ENCODE measurements at regions of chr19 and their contacts with region 1.

Region 1: GRCh38 chr19:33778089-33778791 is 18.4 kb upstream of the KCTD15 start:
- DNase-seq: peak; percentile 69
- H3K4me3 ChIP-seq: no peak overlapping the region
- H3K27ac ChIP-seq: no peak overlapping the region
- H3K4me1 ChIP-seq: peaks cover 6% of the 10 kb centered on the region
- H3K27me3 ChIP-seq: peaks cover 0 to 4% of the 10 kb centered on the region in 2 experiments
- CTCF ChIP-seq: peak; percentile 100
- POLR2A ChIP-seq: no peak

Region 2: GRCh38 chr19:33795370-33796163 is 17.3 kb after region 1 on chr19:
- CTCF ChIA-PET with region 1: interaction called, 36 read pairs
- POLR2A ChIA-PET with region 1: no interaction called
- dilution Hi-C with region 1: no loop called
- intact Hi-C with region 1: loop called (anchors 1 kb)
- DNase-seq: peak; percentile 88
- H3K4me3 ChIP-seq: peak overlapping the region; percentile 64 to 86 (median 71)
- H3K27ac ChIP-seq: peak overlapping the region; percentile 83
- H3K4me1 ChIP-seq: peaks cover 17% of the 10 kb centered on the region
- H3K27me3 ChIP-seq: no peaks in the 10 kb centered on the region
- CTCF ChIP-seq: peak; percentile 74 to 85
- POLR2A ChIP-seq: peak; percentile 81

Region 3: DNA sequence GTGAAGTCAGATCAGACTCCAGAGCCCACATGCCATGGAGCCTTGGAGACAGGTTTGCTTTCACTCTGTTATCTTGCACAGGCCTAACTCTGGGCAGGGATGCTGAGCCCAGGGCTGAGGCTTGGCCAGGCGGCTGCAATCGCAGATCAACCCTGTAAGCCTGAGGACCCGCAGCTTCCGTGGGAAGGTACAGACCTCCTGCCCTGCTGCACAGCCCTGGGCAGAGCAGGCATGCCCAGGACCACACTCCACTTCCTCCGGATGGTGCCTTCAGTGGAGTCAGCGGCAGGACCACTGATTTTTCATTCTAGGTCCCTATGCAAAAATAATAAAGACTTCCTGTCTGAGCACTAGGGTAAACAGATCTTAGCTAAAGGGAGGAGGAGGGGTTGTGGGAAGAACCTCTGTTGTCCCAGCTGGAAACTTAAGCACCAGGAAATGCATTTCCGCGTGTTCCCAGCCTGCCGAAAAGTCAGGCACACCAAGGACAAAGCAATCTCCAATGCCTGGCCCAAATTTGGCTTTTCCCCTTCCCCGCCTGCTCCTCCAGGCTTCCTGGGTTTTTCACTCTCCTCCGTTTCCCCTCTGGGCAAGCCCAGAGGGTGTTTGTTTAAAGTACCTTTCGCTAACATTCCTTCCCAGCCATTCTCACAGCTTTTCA is 105.7 kb after region 1 on chr19:
- CTCF ChIA-PET with region 1: interaction called, 18 read pairs
- POLR2A ChIA-PET with region 1: no interaction called
- dilution Hi-C with region 1: no loop called
- intact Hi-C with region 1: no loop called
- DNase-seq: peak; percentile 93
- H3K4me3 ChIP-seq: peak overlapping the region in 1 of 3 experiments; percentile 8
- H3K27ac ChIP-seq: peak overlapping the region; percentile 84
- H3K4me1 ChIP-seq: peaks cover 28% of the 10 kb centered on the region
- H3K27me3 ChIP-seq: no peaks in the 10 kb centered on the region
- CTCF ChIP-seq: no peak
- POLR2A ChIP-seq: peak; percentile 56

Region 4: GRCh38 chr19:33953592-33953991 is 175.4 kb after region 1 on chr19:
- CTCF ChIA-PET with region 1: interaction called, 19 read pairs
- POLR2A ChIA-PET with region 1: no interaction called
- dilution Hi-C with region 1: no loop called
- intact Hi-C with region 1: no loop called
- DNase-seq: peak; percentile 14
- H3K4me3 ChIP-seq: no peak overlapping the region
- H3K27ac ChIP-seq: no peak overlapping the region
- H3K4me1 ChIP-seq: no peaks in the 10 kb centered on the region
- H3K27me3 ChIP-seq: no peaks in the 10 kb centered on the region
- CTCF ChIP-seq: peak in 1 of 2 donors; percentile 5
- POLR2A ChIP-seq: no peak

Region 5: GRCh38 chr19:34067861-34068271 is 289.6 kb after region 1 on chr19:
- CTCF ChIA-PET with region 1: interaction called, 11 read pairs
- POLR2A ChIA-PET with region 1: no interaction called
- dilution Hi-C with region 1: no loop called
- intact Hi-C with region 1: no loop called
- DNase-seq: no peak
- H3K4me3 ChIP-seq: no peak overlapping the region
- H3K27ac ChIP-seq: no peak overlapping the region
- H3K4me1 ChIP-seq: no peaks in the 10 kb centered on the region
- H3K27me3 ChIP-seq: no peaks in the 10 kb centered on the region
- CTCF ChIP-seq: no peak
- POLR2A ChIP-seq: no peak

Region 6: GRCh38 chr19:34145741-34146202 is 367.5 kb after region 1 on chr19:
- CTCF ChIA-PET with region 1: interaction called, 31 read pairs
- POLR2A ChIA-PET with region 1: no interaction called
- dilution Hi-C with region 1: no loop called
- intact Hi-C with region 1: loop called (anchors 1 kb)
- DNase-seq: peak; percentile 65
- H3K4me3 ChIP-seq: no peak overlapping the region
- H3K27ac ChIP-seq: no peak overlapping the region
- H3K4me1 ChIP-seq: no peaks in the 10 kb centered on the region
- H3K27me3 ChIP-seq: no peaks in the 10 kb centered on the region
- CTCF ChIP-seq: peak; percentile 68 to 71
- POLR2A ChIP-seq: no peak

Measured in endothelial cell of umbilical vein (primary cell).